ENCODE measurements at regions of chr12 and their contacts with region 1.

Region 1: DNA sequence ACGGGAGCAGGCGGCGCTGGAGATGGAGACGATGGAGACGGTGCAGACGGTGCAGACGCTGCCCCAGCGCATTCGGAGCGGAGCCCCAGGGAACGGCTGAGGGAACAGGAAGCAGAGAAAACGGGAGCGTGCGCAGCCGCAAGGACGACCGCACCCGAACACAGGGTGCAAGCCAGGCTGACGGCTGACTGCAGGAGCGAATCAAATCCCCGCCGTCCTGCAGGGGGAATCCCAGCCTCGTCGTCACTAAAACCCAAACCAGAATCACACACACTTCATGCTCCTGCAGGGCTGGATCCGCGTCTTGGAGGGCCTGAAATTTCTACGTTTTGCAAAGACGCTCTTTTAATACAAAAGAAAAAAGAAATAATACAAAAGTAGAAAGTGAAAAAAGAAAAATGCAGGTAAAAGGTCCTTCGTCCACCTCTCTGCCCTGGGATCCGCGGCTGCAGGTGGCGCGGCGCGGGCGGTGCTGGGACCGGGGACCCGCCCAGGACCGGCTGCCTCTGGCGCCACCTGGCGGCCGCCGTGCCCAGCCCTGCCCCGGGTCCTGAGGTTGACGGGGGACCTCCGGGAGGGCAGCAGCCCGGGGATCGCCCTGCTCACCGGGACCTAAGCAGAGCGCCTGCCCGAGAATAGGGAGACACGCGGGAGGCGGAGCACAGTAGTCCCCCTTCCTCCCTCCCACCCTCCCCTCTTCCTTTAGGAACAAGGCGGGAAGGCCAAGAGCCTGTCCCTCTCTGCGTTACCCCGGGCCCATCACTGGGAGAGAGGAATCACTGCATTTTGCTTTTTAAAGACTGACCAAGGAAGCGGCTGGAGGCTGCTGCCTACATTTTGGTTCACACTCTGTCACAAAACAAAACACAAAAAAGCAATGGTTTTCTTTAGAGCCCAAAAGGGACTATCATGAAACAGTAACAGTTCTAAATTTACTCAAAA is 20.1 kb downstream of the STX2 start:
- DNase-seq: peak; percentile 93
- CTCF ChIP-seq: peak; percentile 91

Region 2: DNA sequence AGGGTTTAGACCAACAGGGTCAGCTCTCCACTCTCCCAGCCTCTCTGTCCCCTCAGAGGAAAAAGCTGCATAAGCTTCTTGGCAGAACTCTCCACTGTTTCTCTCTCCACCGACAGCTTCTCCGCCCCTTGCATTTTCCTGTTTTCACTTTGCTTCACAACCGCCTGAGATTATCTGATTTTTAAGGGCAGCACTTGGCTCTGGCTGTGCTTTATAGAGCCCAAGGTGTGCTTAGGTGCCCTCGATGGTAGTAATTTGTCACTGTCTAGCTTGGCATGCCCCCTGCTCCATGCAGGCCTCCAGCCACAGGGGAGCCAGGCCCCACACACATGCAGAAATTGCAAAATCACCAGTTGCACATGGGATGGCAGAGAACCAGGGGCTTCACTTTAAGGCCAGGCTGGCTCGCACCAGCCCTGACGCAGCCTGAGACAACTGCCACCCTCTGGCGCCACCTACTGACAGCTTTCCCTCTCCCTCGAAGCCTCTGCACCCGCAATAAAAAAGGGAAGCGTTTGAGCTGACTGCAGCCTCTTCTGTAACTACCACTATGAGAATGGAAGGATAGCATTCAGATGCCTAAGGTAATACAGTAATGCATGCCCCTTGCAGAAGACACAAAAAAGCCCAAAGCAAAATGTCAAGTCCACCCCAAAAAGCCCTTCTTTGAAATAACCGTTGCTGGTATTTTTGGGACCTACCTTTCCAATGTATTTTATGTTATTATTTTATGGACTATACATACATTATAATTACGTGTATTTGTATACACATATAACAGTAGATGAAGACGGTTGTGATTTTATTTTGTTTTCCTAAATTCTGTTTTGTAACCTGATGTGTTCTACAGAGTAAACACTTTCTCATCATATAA is 70.8 kb before region 1 on chr12:
- CTCF ChIA-PET with region 1: interaction called, 12 read pairs
- POLR2A ChIA-PET with region 1: no interaction called
- DNase-seq: peak; percentile 72
- CTCF ChIP-seq: peak; percentile 89

Region 3: GRCh38 chr12:130761537-130762318 is 57.2 kb before region 1 on chr12:
- CTCF ChIA-PET with region 1: interaction called, 20 read pairs
- POLR2A ChIA-PET with region 1: no interaction called
- DNase-seq: peak; percentile 77
- CTCF ChIP-seq: peak; percentile 74

Region 4: DNA sequence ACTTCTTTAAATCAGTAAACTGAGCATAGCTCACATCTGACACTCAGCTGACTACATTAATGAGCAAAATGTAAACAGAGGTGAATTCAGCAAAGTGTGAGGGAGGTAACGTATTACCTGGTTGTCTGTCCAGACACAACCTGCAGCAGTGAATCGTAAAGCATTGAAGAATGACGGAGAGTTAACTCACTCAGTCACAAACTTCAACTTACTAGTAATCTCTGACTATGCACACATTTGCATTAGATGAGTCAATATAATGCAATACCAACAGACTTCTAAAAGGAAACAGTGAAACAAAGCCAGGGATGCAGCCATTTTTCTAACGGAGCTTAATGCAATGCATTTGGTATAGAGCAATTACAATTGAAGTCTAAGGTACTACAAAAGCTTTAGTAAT is 19.9 kb before region 1 on chr12:
- CTCF ChIA-PET with region 1: interaction called, 11 read pairs
- POLR2A ChIA-PET with region 1: no interaction called
- DNase-seq: no peak
- CTCF ChIP-seq: no peak

Region 5: GRCh38 chr12:130832561-130833209 is 13.8 kb after region 1 on chr12:
- CTCF ChIA-PET with region 1: interaction called, 36 read pairs
- POLR2A ChIA-PET with region 1: no interaction called
- DNase-seq: no peak
- CTCF ChIP-seq: no peak

Measured in GM10248 (cell line).